ENCODE measurements at regions of chr15 and their contacts with region 1.

Region 1: GRCh38 chr15:99733268-99734039 is at the start of gene LYSMD4:
- DNase-seq: peak; percentile 94 to 97 (median 94)
- H3K4me3 ChIP-seq: peak within 1 kb of the TSS; percentile 81 to 86 (median 84)
- H3K4me3 Mint-ChIP-seq: peak within 1 kb of the TSS; percentile 86 to 90
- H3K27ac ChIP-seq: peak within 1 kb of the TSS; percentile 19 to 58
- H3K27ac Mint-ChIP-seq: peak within 1 kb of the TSS in 4 of 7 donors; percentile 58 to 86 (median 79)
- H3K4me1 ChIP-seq: peaks cover 12 to 15% of the 10 kb centered on the region in 2 donors
- H3K4me1 Mint-ChIP-seq: peaks cover 17% of the 10 kb centered on the region
- H3K27me3 ChIP-seq: peaks cover 0 to 9% of the 10 kb centered on the region in 2 donors
- H3K27me3 Mint-ChIP-seq: peaks cover 2 to 10% (median 8%) of the 10 kb centered on the region in 3 donors
- CTCF ChIP-seq: no peak
- polyA plus RNA-seq, gene LYSMD4: 1.1 to 4.7 (median 2.5) TPM

Region 2: DNA sequence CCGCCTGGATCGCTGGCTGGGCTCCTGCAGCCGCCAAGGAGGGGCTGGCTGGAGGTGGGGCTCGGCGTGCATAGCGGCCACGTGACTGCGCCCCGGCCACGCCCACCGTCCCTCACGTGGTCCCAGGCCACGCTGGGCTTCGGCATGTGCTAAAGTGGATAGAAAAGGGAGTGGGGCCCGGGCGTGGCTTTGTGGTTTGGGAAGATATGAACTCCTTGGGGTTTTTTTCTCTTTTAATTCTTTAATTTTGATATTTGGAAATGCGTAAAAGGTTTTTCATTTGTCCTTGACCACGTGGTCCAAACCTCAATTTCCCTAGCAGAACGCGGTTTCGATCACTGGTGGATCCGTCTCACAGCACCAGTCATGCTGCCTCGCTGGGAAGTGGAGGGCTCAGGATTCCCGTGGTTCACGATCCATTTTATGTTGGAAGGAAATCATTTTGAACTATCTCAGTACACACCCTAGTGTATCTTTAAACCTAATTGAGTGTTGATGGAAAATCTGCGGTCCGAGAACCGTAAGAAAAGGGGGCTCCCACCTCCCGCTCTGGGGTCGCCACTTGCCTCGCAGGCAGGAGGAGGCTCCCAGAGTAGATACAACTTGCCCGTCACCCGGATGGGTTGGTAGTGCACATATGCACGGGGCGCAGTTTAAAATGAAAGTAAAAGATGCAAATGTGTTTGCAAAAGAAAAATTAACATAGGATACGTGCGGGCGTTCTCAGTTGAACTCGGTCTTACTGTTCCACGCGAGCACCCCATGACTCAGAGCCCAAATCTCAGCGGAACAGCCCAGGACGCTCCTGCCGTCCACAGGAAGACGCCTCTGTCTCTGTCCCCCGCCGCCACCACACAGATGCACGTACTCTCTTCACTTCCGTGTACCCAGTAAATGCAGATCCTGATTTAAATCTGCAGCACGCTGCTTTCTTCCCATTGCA is 867.8 kb before region 1 on chr15:
- intact Hi-C with region 1: loop called in 1 of 2 experiments (anchors 10 kb)
- DNase-seq: peak; percentile 79 to 86 (median 81)
- H3K4me3 ChIP-seq: peak overlapping the region; percentile 38 to 72 (median 55)
- H3K4me3 Mint-ChIP-seq: peak overlapping the region; percentile 82 to 89
- H3K27ac ChIP-seq: peak overlapping the region; percentile 81 to 88
- H3K27ac Mint-ChIP-seq: peak overlapping the region; percentile 88 to 95 (median 93)
- H3K4me1 ChIP-seq: peaks cover 4 to 18% of the 10 kb centered on the region in 2 donors
- H3K4me1 Mint-ChIP-seq: peaks cover 35% of the 10 kb centered on the region
- H3K27me3 ChIP-seq: no peaks in the 10 kb centered on the region
- H3K27me3 Mint-ChIP-seq: no peaks in the 10 kb centered on the region
- CTCF ChIP-seq: no peak

Region 3: GRCh38 chr15:99250494-99251435 is 482.7 kb before region 1 on chr15:
- intact Hi-C with region 1: loop called in 1 of 2 experiments (anchors 10 kb)
- DNase-seq: peak; percentile 98 to 100 (median 98)
- H3K4me3 ChIP-seq: peak overlapping the region; percentile 67 to 98 (median 95)
- H3K4me3 Mint-ChIP-seq: peak overlapping the region; percentile 87 to 92
- H3K27ac ChIP-seq: peak overlapping the region; percentile 78 to 90
- H3K27ac Mint-ChIP-seq: peak overlapping the region; percentile 85 to 95 (median 90)
- H3K4me1 ChIP-seq: peaks cover 28 to 38% of the 10 kb centered on the region in 2 donors
- H3K4me1 Mint-ChIP-seq: peaks cover 27% of the 10 kb centered on the region
- H3K27me3 ChIP-seq: no peaks in the 10 kb centered on the region
- H3K27me3 Mint-ChIP-seq: no peaks in the 10 kb centered on the region
- CTCF ChIP-seq: no peak

Region 4: DNA sequence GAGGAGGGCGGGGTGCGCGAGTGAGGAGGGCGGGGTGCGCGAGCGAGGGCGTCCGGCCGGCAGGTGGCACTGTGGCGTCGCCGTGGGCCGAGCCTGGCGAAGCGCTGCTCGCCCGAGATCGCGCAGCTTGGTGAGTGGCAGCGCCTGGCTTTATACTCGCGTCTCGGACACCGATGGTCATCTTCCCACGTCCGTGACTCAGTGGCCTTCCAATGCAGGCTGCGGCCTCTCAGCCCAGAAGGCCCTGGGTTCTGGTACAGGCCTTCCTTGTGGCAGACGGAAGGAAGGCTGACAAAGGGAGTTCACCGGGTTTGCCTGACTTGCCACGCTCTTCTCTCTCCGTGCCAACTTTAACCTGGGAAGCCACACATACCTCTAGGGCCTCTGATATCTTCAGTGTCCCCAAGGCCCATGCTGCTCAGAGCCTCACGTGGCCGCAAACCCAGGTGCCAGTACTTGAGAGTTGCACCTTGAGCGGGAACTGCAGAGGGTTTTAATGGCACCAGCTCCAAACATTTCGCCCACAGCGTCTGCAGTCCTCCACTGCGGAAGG is 195.1 kb after region 1 on chr15:
- intact Hi-C with region 1: loop called (anchors 10 kb)
- DNase-seq: peak; percentile 71 to 89 (median 82)
- H3K4me3 ChIP-seq: peak overlapping the region; percentile 32 to 64 (median 35)
- H3K4me3 Mint-ChIP-seq: peak overlapping the region; percentile 75 to 88
- H3K27ac ChIP-seq: peak overlapping the region in 1 of 2 donors; percentile 20
- H3K27ac Mint-ChIP-seq: peak overlapping the region in 6 of 7 donors; percentile 57 to 77 (median 66)
- H3K4me1 ChIP-seq: peaks cover 14 to 17% of the 10 kb centered on the region in 2 donors
- H3K4me1 Mint-ChIP-seq: peaks cover 13% of the 10 kb centered on the region
- H3K27me3 ChIP-seq: peaks cover 10 to 25% of the 10 kb centered on the region in 2 donors
- H3K27me3 Mint-ChIP-seq: peaks cover 30 to 43% (median 32%) of the 10 kb centered on the region in 3 donors
- CTCF ChIP-seq: peak; percentile 56

Region 5: GRCh38 chr15:101277038-101277882 is 1543.8 kb after region 1 on chr15 and contains the start of gene SELENOS:
- intact Hi-C with region 1: loop called in 1 of 2 experiments (anchors 10 kb)
- DNase-seq: peak; percentile 84 to 88 (median 88)
- H3K4me3 ChIP-seq: peak within 1 kb of the TSS; percentile 78 to 89 (median 80)
- H3K4me3 Mint-ChIP-seq: peak within 1 kb of the TSS; percentile 96 to 98
- H3K27ac ChIP-seq: peak within 1 kb of the TSS; percentile 91 to 92
- H3K27ac Mint-ChIP-seq: peak within 1 kb of the TSS; percentile 96 to 98 (median 98)
- H3K4me1 ChIP-seq: peaks cover 17 to 20% of the 10 kb centered on the region in 2 donors
- H3K4me1 Mint-ChIP-seq: peaks cover 20% of the 10 kb centered on the region
- H3K27me3 ChIP-seq: no peaks in the 10 kb centered on the region
- H3K27me3 Mint-ChIP-seq: peaks cover 0 to 5% (median 0%) of the 10 kb centered on the region in 3 donors
- CTCF ChIP-seq: no peak
- polyA plus RNA-seq, gene SELENOS: 40.2 to 70.2 (median 51.6) TPM

Measured in CD14-positive monocyte (primary cell).